ENCODE measurements at regions of chr4 and their contacts with region 1.

Region 1: GRCh38 chr4:16802044-16802443 is 96.4 kb downstream of the LDB2 start:
- DNase-seq: no peak
- H3K4me3 ChIP-seq: no peak overlapping the region
- H3K27me3 ChIP-seq: no peaks in the 10 kb centered on the region
- CTCF ChIP-seq: no peak

Region 2: DNA sequence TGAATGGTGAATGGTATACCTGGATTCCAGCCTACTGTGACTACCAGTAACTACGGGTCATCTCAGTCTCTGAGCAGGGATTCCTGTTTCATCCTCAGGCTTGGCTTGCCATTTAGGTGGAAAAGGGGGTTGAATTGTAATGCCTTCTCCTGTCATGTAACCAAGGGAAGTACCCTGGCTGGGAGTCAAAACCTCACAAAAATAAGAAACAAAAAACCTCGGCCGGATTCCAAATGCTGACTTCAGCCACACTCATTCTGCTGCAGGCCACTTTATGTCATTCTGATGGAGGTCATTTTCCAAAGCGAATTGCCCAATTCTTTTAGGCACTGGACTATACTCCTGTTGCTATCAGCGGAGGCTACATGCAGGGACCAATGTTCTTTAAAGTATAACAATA is 228.3 kb before region 1 on chr4:
- CTCF ChIA-PET with region 1: no interaction called
- POLR2A ChIA-PET with region 1: no interaction called
- DNase-seq: peak; percentile 41
- H3K4me3 ChIP-seq: no peak overlapping the region
- H3K27me3 ChIP-seq: no peaks in the 10 kb centered on the region
- CTCF ChIP-seq: no peak

Region 3: GRCh38 chr4:16969696-16970135 is 167.7 kb after region 1 on chr4:
- CTCF ChIA-PET with region 1: no interaction called
- POLR2A ChIA-PET with region 1: no interaction called
- DNase-seq: peak; percentile 19
- H3K4me3 ChIP-seq: no peak overlapping the region
- H3K27me3 ChIP-seq: no peaks in the 10 kb centered on the region; the same call in 1 of the 2 replicates
- CTCF ChIP-seq: no peak

Region 4: DNA sequence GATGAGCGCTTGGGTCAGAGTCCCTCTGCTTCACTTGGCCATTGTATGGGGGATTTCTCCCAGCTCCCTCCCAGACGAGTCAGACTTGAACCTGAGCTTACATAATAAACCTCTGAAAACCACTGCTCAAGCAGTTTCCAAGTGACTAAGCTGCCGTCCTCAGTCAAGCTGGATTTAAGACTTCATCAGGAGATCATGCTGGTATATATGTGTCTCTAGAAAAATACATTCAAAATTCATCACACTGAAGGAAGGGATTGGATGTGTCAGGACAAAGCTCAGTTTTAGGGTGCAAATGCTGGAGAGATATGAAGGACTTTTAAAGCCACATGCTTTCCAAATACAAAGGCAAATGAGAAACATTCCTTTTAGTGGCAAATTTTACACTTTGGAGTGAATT is 595.6 kb after region 1 on chr4:
- CTCF ChIA-PET with region 1: no interaction called
- POLR2A ChIA-PET with region 1: interaction called, 17 read pairs
- DNase-seq: no peak
- H3K4me3 ChIP-seq: no peak overlapping the region
- H3K27me3 ChIP-seq: peaks cover 4% of the 10 kb centered on the region; the same call in 1 of the 2 replicates
- CTCF ChIP-seq: no peak

Measured in BJ (cell line).